ENCODE measurements at regions of chr6 and their contacts with region 1.

Region 1: DNA sequence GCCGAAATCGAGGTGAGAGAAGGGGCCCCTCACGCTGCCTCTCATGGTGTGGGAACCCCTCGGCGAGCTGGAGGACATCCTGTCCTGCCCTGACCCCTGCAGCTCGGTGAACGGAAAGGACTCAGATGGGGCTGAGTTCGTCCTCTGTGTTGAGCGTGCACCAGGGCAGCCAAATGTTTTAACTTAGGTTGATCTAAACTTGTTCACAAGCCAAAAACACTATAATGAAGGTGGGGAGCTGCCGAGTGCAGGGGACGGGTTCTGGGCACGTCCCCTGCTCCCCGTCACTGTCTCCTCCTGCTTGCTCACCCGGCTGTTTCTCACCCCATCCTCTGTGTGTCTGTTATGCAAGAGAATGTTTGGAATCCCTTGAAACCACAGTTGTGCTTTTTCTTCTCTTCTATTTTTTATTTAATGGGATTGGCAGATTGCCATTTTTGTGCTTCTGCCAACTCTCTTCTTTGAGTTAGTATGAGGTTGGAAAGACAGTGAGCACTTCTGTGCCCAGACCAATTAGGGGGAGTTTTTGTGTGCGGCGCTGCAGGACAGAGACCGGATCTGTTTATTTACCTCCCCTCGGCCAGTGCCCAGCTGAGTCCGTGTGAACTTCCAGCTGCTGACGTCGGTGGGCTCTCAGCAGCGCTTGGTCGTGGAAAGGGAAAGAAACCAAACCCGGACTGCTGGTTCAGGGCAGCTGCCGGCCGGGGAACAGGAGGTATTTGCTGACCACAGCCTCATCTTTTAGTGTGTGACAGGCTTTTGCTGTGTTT is 158.1 kb downstream of the DTNBP1 start:
- DNase-seq: peak; percentile 95
- H3K4me3 ChIP-seq: peak overlapping the region; percentile 28
- H3K27ac ChIP-seq: peak overlapping the region; percentile 57
- H3K4me1 ChIP-seq: peaks cover 29% of the 10 kb centered on the region
- H3K27me3 ChIP-seq: no peaks in the 10 kb centered on the region
- CTCF ChIP-seq: no peak

Region 2: DNA sequence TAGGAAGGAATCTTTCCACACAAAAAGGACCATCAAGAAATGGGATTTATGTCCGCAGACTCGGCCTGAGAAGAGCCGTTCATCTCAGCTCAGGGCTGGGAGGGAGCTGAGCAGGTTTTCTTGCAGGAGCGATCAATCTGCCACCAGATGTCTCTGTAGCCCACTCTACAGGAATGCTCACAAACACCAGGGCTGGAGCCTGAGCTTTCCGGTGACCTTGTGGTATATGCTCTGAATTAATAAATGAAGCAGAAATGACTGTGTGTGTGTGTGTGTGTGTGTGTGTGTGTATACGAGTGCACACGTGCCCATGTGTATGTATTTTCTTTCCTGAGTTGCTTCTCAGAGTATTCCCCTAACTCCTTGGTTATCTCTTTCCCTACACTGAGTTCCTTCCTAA is 1375.2 kb before region 1 on chr6:
- CTCF ChIA-PET with region 1: no interaction called
- POLR2A ChIA-PET with region 1: no interaction called
- intact Hi-C with region 1: loop called (anchors 10 kb)
- DNase-seq: peak; percentile 87
- H3K4me3 ChIP-seq: no peak overlapping the region
- H3K27ac ChIP-seq: peak overlapping the region; percentile 71
- H3K4me1 ChIP-seq: peaks cover 50% of the 10 kb centered on the region
- H3K27me3 ChIP-seq: no peaks in the 10 kb centered on the region
- CTCF ChIP-seq: peak; percentile 84

Region 3: DNA sequence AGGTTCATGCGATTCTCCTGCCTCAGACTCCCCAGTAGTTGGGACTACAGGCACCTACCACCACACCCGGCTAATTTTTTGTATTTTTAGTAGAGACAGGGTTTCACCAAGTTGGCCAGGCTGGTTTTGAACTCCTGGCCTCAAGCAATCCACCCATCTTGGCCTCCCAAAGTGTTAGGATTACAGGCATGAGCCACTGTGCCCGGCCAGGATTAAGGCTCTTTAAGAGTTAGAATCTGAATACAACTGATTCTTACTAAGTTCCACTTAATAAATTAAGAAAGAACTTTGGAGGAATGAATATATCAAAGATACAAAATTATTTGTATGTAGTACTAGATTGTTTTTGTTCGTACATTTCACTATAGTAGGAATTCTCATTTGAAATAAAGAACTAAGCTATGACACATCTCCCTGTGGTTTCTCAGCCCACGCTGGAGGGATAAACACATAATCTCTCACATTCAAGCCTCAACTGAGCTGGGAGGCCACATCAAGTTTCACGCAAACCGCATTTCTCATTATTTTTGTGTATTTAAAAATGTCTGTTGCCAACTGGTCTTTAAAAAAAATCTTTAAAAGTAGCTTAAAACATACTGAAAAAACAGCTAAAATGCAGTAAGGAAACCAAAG is 123.8 kb after region 1 on chr6:
- CTCF ChIA-PET with region 1: no interaction called
- POLR2A ChIA-PET with region 1: no interaction called
- intact Hi-C with region 1: no loop called
- DNase-seq: peak; percentile 44
- H3K4me3 ChIP-seq: no peak overlapping the region
- H3K27ac ChIP-seq: peak overlapping the region; percentile 71
- H3K4me1 ChIP-seq: peaks cover 52% of the 10 kb centered on the region
- H3K27me3 ChIP-seq: no peaks in the 10 kb centered on the region
- CTCF ChIP-seq: no peak

Region 4: GRCh38 chr6:16064671-16065072 is 559.9 kb after region 1 on chr6:
- CTCF ChIA-PET with region 1: no interaction called
- POLR2A ChIA-PET with region 1: no interaction called
- intact Hi-C with region 1: no loop called
- DNase-seq: no peak
- H3K4me3 ChIP-seq: no peak overlapping the region
- H3K27ac ChIP-seq: no peak overlapping the region
- H3K4me1 ChIP-seq: no peaks in the 10 kb centered on the region
- H3K27me3 ChIP-seq: no peaks in the 10 kb centered on the region
- CTCF ChIP-seq: no peak

Region 5: GRCh38 chr6:16168111-16168520 is 663.4 kb after region 1 on chr6:
- CTCF ChIA-PET with region 1: no interaction called
- POLR2A ChIA-PET with region 1: no interaction called
- intact Hi-C with region 1: no loop called
- DNase-seq: no peak
- H3K4me3 ChIP-seq: no peak overlapping the region
- H3K27ac ChIP-seq: no peak overlapping the region
- H3K4me1 ChIP-seq: peaks cover 9% of the 10 kb centered on the region
- H3K27me3 ChIP-seq: no peaks in the 10 kb centered on the region
- CTCF ChIP-seq: no peak

Measured in A673 (cell line).